GM23248 (cell line): ENCODE measurements at regions of chr12 and their contacts with region 1.

Region 1: GRCh38 chr12:117857632-117858612 is 110.9 kb downstream of the KSR2 start:
- DNase-seq: peak; percentile 61
- H3K4me3 ChIP-seq: no peak overlapping the region
- H3K27ac ChIP-seq: no peak overlapping the region
- H3K4me1 ChIP-seq: no peaks in the 10 kb centered on the region
- H3K27me3 ChIP-seq: peaks cover 7% of the 10 kb centered on the region; the same call in 1 of the 2 replicates

Region 2: GRCh38 chr12:117212563-117213190 is 645.2 kb before region 1 on chr12:
- in situ Hi-C with region 1: loop called (anchors 10 kb)
- DNase-seq: peak; percentile 79
- H3K4me3 ChIP-seq: no peak overlapping the region
- H3K27ac ChIP-seq: no peak overlapping the region
- H3K4me1 ChIP-seq: no peaks in the 10 kb centered on the region
- H3K27me3 ChIP-seq: peaks cover 10% of the 10 kb centered on the region